MCF 10A (cell line): ENCODE measurements at regions of chr5 and their contacts with region 1.

Region 1: DNA sequence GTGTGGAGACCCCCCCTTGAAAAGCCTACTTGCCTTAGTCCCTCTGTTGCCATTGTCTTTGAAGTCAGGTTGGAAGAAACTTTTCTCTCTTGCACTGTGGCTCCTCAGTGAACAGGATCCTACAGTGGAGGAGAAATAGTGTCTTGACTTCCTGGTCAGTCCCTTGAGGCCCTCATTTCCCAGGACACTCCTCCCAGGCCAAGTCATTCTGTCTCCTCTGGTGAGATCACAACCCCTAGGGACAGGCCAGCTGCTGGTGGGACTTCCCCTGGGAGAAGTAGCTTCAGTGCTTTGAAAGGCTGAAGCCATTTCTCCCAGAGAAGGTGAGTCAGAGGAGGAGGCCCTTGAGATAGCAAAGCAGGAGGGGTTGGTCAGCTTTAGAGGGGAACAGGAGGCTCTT is 10.1 kb upstream of the GRIA1 start:
- DNase-seq: peak; percentile 65
- H3K4me3 Mint-ChIP-seq: no peak overlapping the region
- H3K27ac Mint-ChIP-seq: no peak overlapping the region
- H3K4me1 Mint-ChIP-seq: peaks cover 25% of the 10 kb centered on the region
- H3K27me3 Mint-ChIP-seq: no peaks in the 10 kb centered on the region
- CTCF ChIP-seq: no peak

Region 2: GRCh38 chr5:153463806-153464205 is 16.6 kb before region 1 on chr5:
- CTCF ChIA-PET with region 1: interaction called, 34 read pairs
- POLR2A ChIA-PET with region 1: interaction called, 9 read pairs
- intact Hi-C with region 1: no loop called
- DNase-seq: peak; percentile 64
- H3K4me3 Mint-ChIP-seq: no peak overlapping the region
- H3K27ac Mint-ChIP-seq: no peak overlapping the region
- H3K4me1 Mint-ChIP-seq: peaks cover 13% of the 10 kb centered on the region
- H3K27me3 Mint-ChIP-seq: no peaks in the 10 kb centered on the region
- CTCF ChIP-seq: no peak

Region 3: GRCh38 chr5:153546566-153546965 is 66.2 kb after region 1 on chr5:
- CTCF ChIA-PET with region 1: no interaction called
- POLR2A ChIA-PET with region 1: no interaction called
- intact Hi-C with region 1: no loop called
- DNase-seq: peak; percentile 63
- H3K4me3 Mint-ChIP-seq: no peak overlapping the region
- H3K27ac Mint-ChIP-seq: peak overlapping the region; percentile 29
- H3K4me1 Mint-ChIP-seq: peaks cover 23% of the 10 kb centered on the region
- H3K27me3 Mint-ChIP-seq: no peaks in the 10 kb centered on the region
- CTCF ChIP-seq: no peak